Caco-2 (cell line): ENCODE measurements at regions of chr12 and their contacts with region 1.

Region 1: DNA sequence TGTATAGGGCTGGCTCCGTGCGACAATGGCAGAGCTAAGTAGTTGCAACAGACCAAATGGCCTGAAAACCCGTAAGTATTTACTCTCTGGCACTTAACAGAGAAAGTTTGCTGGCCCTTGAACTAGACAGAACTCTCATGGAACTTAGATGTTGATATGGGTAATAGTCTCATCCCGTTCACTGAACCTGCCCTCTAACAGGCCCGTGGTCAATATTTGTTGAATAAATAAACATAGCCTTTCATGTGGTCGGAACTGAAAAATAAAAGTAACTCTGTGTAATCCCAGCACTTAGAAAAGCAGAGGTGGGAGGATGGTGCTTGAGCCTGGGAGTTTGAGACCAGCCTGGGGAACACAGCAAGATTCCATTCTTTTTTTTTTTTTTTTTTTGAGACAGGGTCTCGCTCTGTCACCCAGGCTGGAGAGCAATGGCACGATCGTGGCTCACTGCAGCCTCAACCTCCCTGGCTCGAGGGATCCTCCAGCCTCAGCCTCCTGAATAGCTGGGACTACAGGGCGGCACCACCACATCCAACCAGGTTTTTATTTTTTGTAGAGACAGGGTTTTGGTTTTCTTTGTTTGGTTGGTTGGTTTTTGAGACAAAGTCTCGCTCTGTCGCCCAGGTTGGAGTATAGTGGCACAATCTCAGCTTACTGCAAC is 29.7 kb downstream of the KDM2B start:
- DNase-seq: peak in 1 of 2 experiments; percentile 37
- H3K4me3 ChIP-seq: no peak overlapping the region
- H3K4me3 Mint-ChIP-seq: no peak overlapping the region
- H3K27ac Mint-ChIP-seq: no peak overlapping the region
- H3K4me1 ChIP-seq: no peaks in the 10 kb centered on the region
- H3K4me1 Mint-ChIP-seq: no peaks in the 10 kb centered on the region
- H3K27me3 ChIP-seq: no peaks in the 10 kb centered on the region
- H3K27me3 Mint-ChIP-seq: no peaks in the 10 kb centered on the region
- CTCF ChIP-seq: no peak

Region 2: GRCh38 chr12:121326996-121327674 is 224.0 kb before region 1 on chr12:
- CTCF ChIA-PET with region 1: no interaction called
- POLR2A ChIA-PET with region 1: no interaction called
- intact Hi-C with region 1: no loop called
- DNase-seq: no peak
- H3K4me3 ChIP-seq: no peak overlapping the region
- H3K4me3 Mint-ChIP-seq: no peak overlapping the region
- H3K27ac Mint-ChIP-seq: no peak overlapping the region
- H3K4me1 ChIP-seq: no peaks in the 10 kb centered on the region
- H3K4me1 Mint-ChIP-seq: peaks cover 6% of the 10 kb centered on the region
- H3K27me3 ChIP-seq: no peaks in the 10 kb centered on the region
- H3K27me3 Mint-ChIP-seq: no peaks in the 10 kb centered on the region
- CTCF ChIP-seq: no peak

Region 3: DNA sequence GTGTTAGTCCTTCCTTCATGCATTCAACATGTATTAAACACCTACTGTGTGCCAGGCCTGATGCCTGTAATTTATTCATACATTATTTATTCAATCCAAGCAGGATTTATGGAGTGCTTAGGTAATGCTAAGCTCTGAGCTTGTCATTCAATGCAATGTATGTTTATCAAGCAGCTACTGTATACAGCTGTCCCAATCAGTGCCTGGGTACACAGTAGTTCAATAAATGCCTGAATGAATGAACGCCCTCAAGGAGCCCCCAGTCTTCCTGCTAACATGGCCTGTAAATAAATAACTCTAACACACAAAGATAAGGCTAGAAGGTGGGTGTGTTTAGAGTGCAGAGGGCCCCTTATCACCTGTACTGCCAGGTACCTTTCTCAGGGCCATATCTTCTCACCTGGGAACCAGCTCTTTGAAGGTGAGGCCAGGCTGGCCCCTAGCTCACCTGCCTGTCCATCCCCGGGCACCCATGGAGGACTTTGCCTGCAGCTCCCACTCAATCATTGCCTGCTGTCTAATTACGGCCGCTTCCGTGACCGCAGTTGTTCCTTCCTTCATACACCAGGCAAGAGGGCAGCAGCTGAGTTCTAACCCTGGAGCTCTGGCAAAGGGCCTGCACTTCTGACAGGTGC is 49.7 kb after region 1 on chr12:
- CTCF ChIA-PET with region 1: interaction called, 12 read pairs
- POLR2A ChIA-PET with region 1: no interaction called
- intact Hi-C with region 1: no loop called
- DNase-seq: peak; percentile 89 to 97
- H3K4me3 ChIP-seq: no peak overlapping the region
- H3K4me3 Mint-ChIP-seq: peak overlapping the region; percentile 15
- H3K27ac Mint-ChIP-seq: peak overlapping the region; percentile 76
- H3K4me1 ChIP-seq: peaks cover 47% of the 10 kb centered on the region
- H3K4me1 Mint-ChIP-seq: peaks cover 26% of the 10 kb centered on the region
- H3K27me3 ChIP-seq: no peaks in the 10 kb centered on the region
- H3K27me3 Mint-ChIP-seq: no peaks in the 10 kb centered on the region
- CTCF ChIP-seq: no peak

Region 4: DNA sequence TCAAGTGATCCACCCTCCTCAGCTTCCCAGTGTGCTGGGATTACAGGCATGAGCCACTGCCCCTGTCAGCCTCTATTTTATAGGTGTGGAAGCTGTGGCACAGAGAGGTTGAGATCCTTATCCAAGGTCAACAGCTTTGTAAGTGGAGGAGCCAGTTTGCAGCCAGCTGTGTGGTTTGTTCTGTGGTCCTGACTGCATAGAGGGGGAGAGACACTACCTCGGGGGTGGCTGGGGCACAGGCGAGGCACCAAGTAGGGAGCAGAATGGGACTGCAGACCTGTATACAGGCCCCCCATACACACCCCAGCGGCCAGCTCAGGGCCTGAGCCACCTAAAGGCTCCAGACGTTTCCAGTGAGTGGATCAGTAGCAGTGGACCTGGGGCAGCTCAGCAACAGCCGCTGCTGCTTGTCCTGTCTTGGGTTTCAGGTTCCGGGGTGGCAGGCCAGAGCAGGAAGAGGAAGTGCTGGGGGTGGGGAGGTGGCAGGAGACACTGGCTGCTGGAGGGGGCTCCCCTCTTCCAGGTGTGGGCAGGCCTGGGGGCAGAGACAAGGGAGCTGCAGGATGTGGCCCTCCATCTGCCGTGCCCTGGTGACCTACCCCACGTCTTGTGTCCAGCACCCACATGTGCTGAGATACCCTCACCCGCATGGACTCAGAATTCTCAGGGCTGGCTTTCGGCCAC is 86.3 kb after region 1 on chr12:
- CTCF ChIA-PET with region 1: interaction called, 12 read pairs
- POLR2A ChIA-PET with region 1: no interaction called
- intact Hi-C with region 1: no loop called
- DNase-seq: no peak
- H3K4me3 ChIP-seq: no peak overlapping the region
- H3K4me3 Mint-ChIP-seq: no peak overlapping the region
- H3K27ac Mint-ChIP-seq: no peak overlapping the region
- H3K4me1 ChIP-seq: 0 out of 2 replicates have a peak, but pooled peaks cover 3% of the 10 kb centered on the region
- H3K4me1 Mint-ChIP-seq: no peaks in the 10 kb centered on the region
- H3K27me3 ChIP-seq: no peaks in the 10 kb centered on the region
- H3K27me3 Mint-ChIP-seq: no peaks in the 10 kb centered on the region
- CTCF ChIP-seq: no peak

Region 5: GRCh38 chr12:121678716-121679580 is 127.8 kb after region 1 on chr12:
- CTCF ChIA-PET with region 1: interaction called, 6 read pairs
- POLR2A ChIA-PET with region 1: no interaction called
- intact Hi-C with region 1: loop called (anchors 1 kb)
- DNase-seq: no peak
- H3K4me3 ChIP-seq: no peak overlapping the region
- H3K4me3 Mint-ChIP-seq: no peak overlapping the region
- H3K27ac Mint-ChIP-seq: peak overlapping the region; percentile 73
- H3K4me1 ChIP-seq: peaks cover 6% of the 10 kb centered on the region; the same call in 1 of the 2 replicates
- H3K4me1 Mint-ChIP-seq: peaks cover 9% of the 10 kb centered on the region
- H3K27me3 ChIP-seq: no peaks in the 10 kb centered on the region
- H3K27me3 Mint-ChIP-seq: no peaks in the 10 kb centered on the region
- CTCF ChIP-seq: no peak

Region 6: DNA sequence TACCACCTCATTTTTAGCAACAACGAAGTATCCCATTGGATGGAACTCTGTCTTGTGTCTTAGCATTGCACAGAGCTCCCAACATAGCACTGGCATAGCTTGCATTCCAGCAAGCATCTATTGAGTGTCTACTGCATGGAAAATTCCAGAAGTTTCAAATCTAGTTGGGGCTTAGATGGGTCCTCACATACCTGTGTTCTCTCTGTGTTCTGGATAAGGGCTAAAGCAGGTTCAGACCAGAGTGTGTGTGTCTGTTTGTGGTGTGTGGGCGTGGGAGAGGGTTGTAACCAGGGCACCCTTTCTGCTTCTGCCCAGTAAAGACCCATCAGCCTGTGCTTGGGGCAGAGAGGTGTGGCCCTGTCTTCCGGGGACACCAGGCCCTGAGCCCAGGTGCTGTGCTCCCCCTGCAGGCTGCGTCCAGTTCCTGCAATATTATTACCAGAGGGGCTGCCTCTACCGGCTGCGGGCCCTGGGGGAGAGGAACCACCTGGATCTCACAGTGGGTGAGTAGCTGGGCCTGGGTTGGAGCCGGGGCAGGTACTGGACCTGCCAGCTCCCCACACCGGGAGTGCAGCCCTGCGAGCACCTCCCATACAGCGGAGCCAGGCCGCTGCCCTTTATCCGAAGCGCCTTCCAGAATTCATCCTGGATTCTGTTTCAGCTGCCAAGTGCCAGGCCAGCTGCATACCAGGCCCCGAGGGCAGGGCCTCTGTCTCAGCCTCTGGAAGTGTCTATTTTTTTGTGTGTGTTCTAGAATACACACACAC is 222.1 kb after region 1 on chr12:
- CTCF ChIA-PET with region 1: no interaction called
- POLR2A ChIA-PET with region 1: no interaction called
- intact Hi-C with region 1: loop called (anchors 5 kb)
- DNase-seq: peak; percentile 81 to 86
- H3K4me3 ChIP-seq: no peak overlapping the region
- H3K4me3 Mint-ChIP-seq: no peak overlapping the region
- H3K27ac Mint-ChIP-seq: peak overlapping the region; percentile 25
- H3K4me1 ChIP-seq: peaks cover 20% of the 10 kb centered on the region
- H3K4me1 Mint-ChIP-seq: peaks cover 11% of the 10 kb centered on the region
- H3K27me3 ChIP-seq: no peaks in the 10 kb centered on the region
- H3K27me3 Mint-ChIP-seq: no peaks in the 10 kb centered on the region
- CTCF ChIP-seq: peak; percentile 89 to 90